ENCODE measurements at regions of chr14 and their contacts with region 1.

Region 1: GRCh38 chr14:90409209-90409730 is 12.4 kb downstream of the CALM1 start:
- DNase-seq: no peak
- ATAC-seq: peak; percentile 53
- H3K4me3 ChIP-seq: no peak overlapping the region
- H3K27ac ChIP-seq: no peak overlapping the region
- H3K4me1 ChIP-seq: peaks cover 4% of the 10 kb centered on the region; the same call in 1 of the 2 replicates
- H3K27me3 ChIP-seq: no peaks in the 10 kb centered on the region
- CTCF ChIP-seq: no peak

Region 2: DNA sequence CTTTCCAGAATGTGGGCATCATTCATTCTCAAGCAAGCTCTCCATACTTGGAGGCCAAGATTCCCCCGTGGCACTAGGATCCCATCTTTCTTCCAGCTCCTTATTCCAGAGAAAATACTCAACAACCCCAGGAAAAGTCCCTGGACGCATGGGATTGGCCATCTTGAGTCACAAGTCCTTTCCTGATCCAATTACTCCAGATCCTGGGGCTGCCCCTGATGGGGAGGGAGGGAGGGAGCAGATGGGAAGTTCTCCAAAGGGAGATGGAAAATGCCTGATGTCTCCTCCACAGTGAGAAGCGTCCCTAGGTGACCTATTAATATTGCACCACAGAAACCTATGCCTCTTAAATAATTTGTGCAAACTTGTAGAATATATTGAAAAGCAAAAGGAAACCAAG is 359.9 kb before region 1 on chr14:
- CTCF ChIA-PET with region 1: no interaction called
- POLR2A ChIA-PET with region 1: no interaction called
- in situ Hi-C with region 1: no loop called
- intact Hi-C with region 1: no loop called
- DNase-seq: no peak
- ATAC-seq: no peak
- H3K4me3 ChIP-seq: no peak overlapping the region
- H3K27ac ChIP-seq: no peak overlapping the region
- H3K4me1 ChIP-seq: no peaks in the 10 kb centered on the region
- H3K27me3 ChIP-seq: peaks cover 6% of the 10 kb centered on the region; the same call in 1 of the 2 replicates
- CTCF ChIP-seq: no peak

Region 3: GRCh38 chr14:90368946-90369721 is 40.1 kb before region 1 on chr14:
- CTCF ChIA-PET with region 1: no interaction called
- POLR2A ChIA-PET with region 1: no interaction called
- in situ Hi-C with region 1: no loop called
- intact Hi-C with region 1: no loop called
- DNase-seq: no peak
- ATAC-seq: peak; percentile 53
- H3K4me3 ChIP-seq: no peak overlapping the region
- H3K27ac ChIP-seq: no peak overlapping the region
- H3K4me1 ChIP-seq: no peaks in the 10 kb centered on the region
- H3K27me3 ChIP-seq: no peaks in the 10 kb centered on the region
- CTCF ChIP-seq: no peak; the same call in 1 of the 2 replicates

Region 4: DNA sequence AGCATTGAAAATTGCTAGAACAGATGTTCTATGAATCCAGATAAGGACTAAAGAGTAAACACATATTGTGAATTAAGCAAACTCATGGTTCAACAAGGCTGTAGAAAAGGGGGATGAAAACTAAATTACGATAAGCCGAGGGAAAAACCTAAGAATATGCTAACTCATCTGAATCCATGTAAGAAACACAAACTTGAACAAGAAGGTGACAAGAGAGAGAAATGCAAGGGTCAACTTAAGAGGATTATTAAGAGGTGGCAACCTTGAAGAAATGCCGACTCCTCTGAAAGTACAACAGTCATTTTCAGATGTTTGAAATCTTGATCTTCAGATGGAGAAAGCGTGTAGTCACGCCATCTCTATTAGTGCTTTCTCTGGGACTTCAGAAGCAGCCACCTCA is 278.4 kb after region 1 on chr14:
- CTCF ChIA-PET with region 1: no interaction called
- POLR2A ChIA-PET with region 1: no interaction called
- in situ Hi-C with region 1: no loop called
- intact Hi-C with region 1: loop called (anchors 5 kb)
- DNase-seq: no peak
- ATAC-seq: no peak
- H3K4me3 ChIP-seq: no peak overlapping the region
- H3K27ac ChIP-seq: no peak overlapping the region
- H3K4me1 ChIP-seq: no peaks in the 10 kb centered on the region
- H3K27me3 ChIP-seq: no peaks in the 10 kb centered on the region
- CTCF ChIP-seq: no peak

Measured in Panc1 (cell line).